BJ (cell line): ENCODE measurements at regions of chr2 and their contacts with region 1.

Region 1: DNA sequence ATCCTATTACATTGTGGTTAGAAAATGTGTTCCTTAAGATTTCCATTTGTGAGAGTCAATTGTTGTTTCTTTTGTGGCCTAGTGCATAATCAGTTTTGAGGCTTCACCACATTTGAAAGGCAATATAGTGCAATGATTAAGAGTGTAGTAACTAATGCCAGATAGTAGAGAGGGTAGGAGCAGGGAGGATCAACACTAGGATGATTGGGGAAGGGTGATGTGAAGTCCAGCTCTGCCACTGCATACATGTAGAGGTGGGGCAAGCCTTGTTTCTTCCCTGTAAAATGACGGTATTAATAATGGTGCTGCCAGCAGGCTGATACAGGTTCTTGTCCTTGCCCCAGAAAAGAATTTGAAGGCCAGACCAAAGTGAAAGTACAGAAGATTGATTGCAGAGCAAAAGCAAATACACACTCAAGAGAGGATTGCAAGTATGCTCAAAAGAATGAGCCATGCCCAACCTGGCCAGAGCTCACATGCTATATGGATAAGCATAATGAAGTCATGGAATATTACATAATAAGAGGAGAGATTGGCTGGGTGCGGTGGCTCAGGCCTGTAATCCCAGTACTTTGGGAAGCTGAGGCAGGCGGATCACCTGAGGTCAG is 8.0 kb downstream of the SP100 start:
- DNase-seq: no peak
- H3K4me3 ChIP-seq: no peak overlapping the region
- H3K27me3 ChIP-seq: no peaks in the 10 kb centered on the region
- CTCF ChIP-seq: no peak

Region 2: DNA sequence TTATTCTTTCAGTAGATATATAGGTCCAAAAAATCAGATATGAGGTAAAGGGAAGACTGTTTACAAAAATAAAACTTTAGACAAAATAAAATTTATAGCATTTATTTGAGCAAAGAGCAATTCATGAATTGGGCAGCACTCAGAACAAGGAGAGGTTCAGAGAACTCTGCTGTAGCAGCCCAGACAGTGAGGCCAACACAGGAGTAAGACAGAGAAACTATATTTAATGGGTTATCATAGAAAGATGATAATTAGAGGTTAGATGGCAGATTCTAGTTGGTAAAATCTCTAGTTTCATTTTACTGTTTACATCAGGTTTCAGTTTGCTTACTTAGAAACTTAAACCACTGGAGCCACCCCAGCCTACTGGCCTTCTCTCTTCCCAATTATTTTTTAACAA is 127.0 kb before region 1 on chr2:
- CTCF ChIA-PET with region 1: no interaction called
- POLR2A ChIA-PET with region 1: no interaction called
- DNase-seq: no peak
- H3K4me3 ChIP-seq: no peak overlapping the region
- H3K27me3 ChIP-seq: no peaks in the 10 kb centered on the region; the same call in 1 of the 2 replicates
- CTCF ChIP-seq: no peak

Region 3: GRCh38 chr2:230441227-230441897 is 17.4 kb after region 1 on chr2:
- CTCF ChIA-PET with region 1: no interaction called
- POLR2A ChIA-PET with region 1: interaction called, 14 read pairs
- DNase-seq: no peak
- H3K4me3 ChIP-seq: no peak overlapping the region
- H3K27me3 ChIP-seq: no peaks in the 10 kb centered on the region
- CTCF ChIP-seq: no peak

Region 4: DNA sequence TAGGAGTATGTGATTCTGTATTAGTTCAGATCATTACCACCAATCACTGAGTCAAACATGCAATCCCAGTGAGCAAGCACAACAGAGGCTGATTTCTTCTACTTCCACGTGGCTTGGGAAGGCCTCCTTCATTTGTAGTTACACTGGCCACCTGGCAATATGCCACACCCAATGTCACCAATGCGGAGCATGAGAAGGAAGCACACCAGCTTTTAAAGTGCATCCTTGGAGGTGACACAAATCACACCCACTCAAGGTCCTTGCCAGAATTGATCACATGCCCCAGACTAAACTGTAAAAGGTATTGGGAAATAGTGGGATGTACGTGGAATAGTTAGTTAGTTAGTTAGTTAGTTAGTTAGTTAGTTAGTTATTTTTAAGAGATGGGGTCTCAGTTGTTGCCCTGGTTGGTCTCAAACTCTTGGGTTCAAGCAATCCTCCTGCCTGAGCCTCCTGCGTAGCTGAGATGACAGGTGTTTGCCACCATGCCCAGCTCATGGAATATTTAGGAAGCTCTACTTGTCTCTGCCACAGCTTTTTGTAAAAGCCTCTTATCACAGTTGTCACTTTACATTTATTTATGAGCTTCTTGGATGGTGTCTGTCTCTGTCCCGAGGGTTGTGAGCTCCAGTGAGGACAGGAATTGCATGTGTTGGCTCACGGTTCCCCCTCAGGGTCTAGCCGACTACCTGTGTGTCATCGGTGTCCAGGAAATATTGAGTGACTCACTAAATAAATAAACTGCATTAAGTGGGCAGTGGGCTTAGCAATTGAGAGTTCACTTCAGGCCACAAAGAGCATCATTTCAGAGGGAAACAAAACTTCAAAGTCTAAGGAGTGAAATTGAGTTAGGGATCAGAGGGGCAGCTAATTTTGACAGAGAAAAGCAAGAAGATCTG is 260.6 kb after region 1 on chr2:
- CTCF ChIA-PET with region 1: no interaction called
- POLR2A ChIA-PET with region 1: no interaction called
- DNase-seq: no peak
- H3K4me3 ChIP-seq: no peak overlapping the region
- H3K27me3 ChIP-seq: no peaks in the 10 kb centered on the region
- CTCF ChIP-seq: no peak